OCI-LY7 (cell line): ENCODE measurements at regions of chr20 and their contacts with region 1.

Region 1: DNA sequence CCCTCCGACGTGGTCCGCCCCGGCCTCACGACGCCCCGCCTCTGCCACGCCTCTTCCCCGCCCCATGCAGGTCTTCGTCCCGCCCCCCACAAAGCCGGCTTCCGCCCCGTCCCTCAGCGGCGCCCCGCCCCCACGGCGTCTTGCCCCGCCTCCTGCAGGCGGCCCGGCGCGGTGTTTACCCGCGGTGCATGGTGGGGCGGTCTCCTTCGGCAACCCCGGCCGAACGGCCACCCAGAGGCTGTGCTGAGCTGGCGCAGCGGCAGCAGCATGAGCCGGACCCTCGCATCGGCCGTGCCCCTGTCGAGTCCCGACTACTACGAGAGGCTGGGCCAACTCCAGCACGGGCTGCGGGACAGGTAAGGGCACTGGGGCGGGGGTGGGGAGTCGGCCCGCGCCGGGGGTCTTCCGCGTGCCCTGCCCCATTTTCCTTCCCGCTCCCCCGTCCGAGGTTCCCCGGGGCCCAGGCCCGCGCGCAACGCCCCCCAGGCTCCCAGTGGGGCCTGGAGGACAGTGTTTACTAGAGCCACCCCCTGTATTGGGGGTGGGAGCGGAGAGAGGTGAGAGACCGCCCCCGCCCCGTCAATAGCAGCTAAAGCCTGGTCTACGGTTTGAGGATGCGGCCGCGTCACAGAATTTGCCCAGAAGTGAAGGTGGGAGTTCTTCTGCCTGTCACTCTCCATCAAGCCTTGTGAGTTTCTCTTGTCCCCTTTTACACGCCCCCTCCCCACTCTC is at the start of gene KIZ:
- DNase-seq: peak; percentile 93
- H3K4me3 ChIP-seq: peak within 1 kb of the TSS; percentile 100
- H3K27ac ChIP-seq: peak within 1 kb of the TSS; percentile 75
- H3K4me1 ChIP-seq: peaks cover 20% of the 10 kb centered on the region
- CTCF ChIP-seq: peak; percentile 35
- total RNA-seq, gene KIZ: 16.0 and 21.6 TPM in 2 replicates

Region 2: GRCh38 chr20:21048841-21049273 is 77.2 kb before region 1 on chr20:
- CTCF ChIA-PET with region 1: no interaction called
- POLR2A ChIA-PET with region 1: no interaction called
- intact Hi-C with region 1: loop called (anchors 5 kb)
- DNase-seq: peak; percentile 42
- H3K4me3 ChIP-seq: no peak overlapping the region
- H3K27ac ChIP-seq: no peak overlapping the region
- H3K4me1 ChIP-seq: no peaks in the 10 kb centered on the region
- CTCF ChIP-seq: peak; percentile 91

Region 3: GRCh38 chr20:21185849-21186248 is 59.8 kb after region 1 on chr20:
- CTCF ChIA-PET with region 1: no interaction called
- POLR2A ChIA-PET with region 1: no interaction called
- intact Hi-C with region 1: loop called (anchors 2 kb)
- DNase-seq: no peak
- H3K4me3 ChIP-seq: no peak overlapping the region
- H3K27ac ChIP-seq: no peak overlapping the region
- H3K4me1 ChIP-seq: no peaks in the 10 kb centered on the region
- CTCF ChIP-seq: no peak

Region 4: GRCh38 chr20:21303061-21303871 is 177.3 kb after region 1 on chr20 and contains the start of gene XRN2:
- CTCF ChIA-PET with region 1: no interaction called
- POLR2A ChIA-PET with region 1: no interaction called
- intact Hi-C with region 1: loop called (anchors 10 kb)
- DNase-seq: peak; percentile 93
- H3K4me3 ChIP-seq: peak within 1 kb of the TSS; percentile 95
- H3K27ac ChIP-seq: peak within 1 kb of the TSS; percentile 72
- H3K4me1 ChIP-seq: peaks cover 17% of the 10 kb centered on the region
- CTCF ChIP-seq: no peak
- total RNA-seq, gene XRN2: 43.7 and 47.9 TPM in 2 replicates